GM12878 (cell line): ENCODE measurements at regions of chr22 and their contacts with region 1.

Region 1: GRCh38 chr22:31230871-31231621 is 18.9 kb downstream of the LIMK2 start:
- DNase-seq: no peak
- ATAC-seq: peak; percentile 81
- H3K4me3 ChIP-seq: no peak overlapping the region
- H3K27ac ChIP-seq: peak overlapping the region; percentile 49
- H3K4me1 ChIP-seq: peaks cover 25% of the 10 kb centered on the region
- H3K27me3 ChIP-seq: no peaks in the 10 kb centered on the region
- CTCF ChIP-seq: peak; percentile 67 to 83 (median 77)
- EP300 ChIP-seq: peak in 1 of 2 experiments; percentile 5; a peak in 1 of 4 replicates
- POLR2A ChIP-seq: no peak
- RAD21 ChIP-seq: peak; percentile 89

Region 2: DNA sequence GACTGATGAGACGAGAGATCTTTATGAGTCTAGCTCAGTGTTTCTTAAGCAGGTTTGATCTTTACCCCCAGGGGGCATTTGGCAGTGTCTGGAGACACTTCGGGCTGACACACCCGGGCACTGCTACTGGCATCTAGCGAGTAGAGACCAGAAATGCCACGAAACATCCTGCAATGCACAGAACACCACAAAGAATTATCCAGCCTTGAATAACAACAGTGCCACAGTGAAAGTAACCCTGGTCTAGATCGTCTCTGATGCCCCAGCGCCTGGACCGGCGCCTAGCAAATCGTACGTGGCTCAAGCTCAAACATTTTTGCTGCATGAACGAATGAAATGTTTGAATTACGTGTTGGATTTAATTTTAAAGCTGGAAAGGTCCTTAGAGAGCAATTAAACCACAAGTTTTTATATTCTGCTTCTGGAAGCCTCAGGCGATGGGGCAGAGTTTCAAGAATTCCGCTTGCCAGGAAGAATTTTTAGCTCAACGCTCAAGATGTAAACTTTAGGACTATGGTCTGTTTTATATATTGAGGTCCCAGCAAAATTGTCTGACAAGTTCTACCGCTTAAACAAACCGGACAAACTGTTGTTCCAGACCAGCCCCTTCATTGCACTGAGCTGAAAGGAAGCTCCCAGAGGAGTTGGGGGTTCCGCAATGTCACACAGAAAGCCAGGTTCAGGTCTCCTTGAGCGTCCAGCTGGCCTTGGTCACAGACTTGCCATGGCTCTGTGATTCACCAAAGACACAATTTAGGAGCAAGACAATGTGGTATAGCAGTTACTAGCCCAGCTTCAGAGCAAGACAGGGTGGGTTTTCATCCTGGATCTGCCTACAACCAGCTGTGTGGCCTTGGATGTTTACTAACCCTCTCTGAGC is 194.1 kb before region 1 on chr22:
- CTCF ChIA-PET with region 1: no interaction called
- POLR2A ChIA-PET with region 1: no interaction called
- RAD21 ChIA-PET with region 1: no interaction called
- SMC1A ChIA-PET with region 1: no interaction called
- in situ Hi-C with region 1: no loop called
- intact Hi-C with region 1: no loop called
- DNase-seq: no peak
- ATAC-seq: no peak
- H3K4me3 ChIP-seq: no peak overlapping the region
- H3K27ac ChIP-seq: no peak overlapping the region
- H3K4me1 ChIP-seq: no peaks in the 10 kb centered on the region
- H3K27me3 ChIP-seq: no peaks in the 10 kb centered on the region; a peak in 1 of 4 replicates
- CTCF ChIP-seq: no peak
- EP300 ChIP-seq: no peak
- POLR2A ChIP-seq: no peak
- RAD21 ChIP-seq: no peak

Region 3: DNA sequence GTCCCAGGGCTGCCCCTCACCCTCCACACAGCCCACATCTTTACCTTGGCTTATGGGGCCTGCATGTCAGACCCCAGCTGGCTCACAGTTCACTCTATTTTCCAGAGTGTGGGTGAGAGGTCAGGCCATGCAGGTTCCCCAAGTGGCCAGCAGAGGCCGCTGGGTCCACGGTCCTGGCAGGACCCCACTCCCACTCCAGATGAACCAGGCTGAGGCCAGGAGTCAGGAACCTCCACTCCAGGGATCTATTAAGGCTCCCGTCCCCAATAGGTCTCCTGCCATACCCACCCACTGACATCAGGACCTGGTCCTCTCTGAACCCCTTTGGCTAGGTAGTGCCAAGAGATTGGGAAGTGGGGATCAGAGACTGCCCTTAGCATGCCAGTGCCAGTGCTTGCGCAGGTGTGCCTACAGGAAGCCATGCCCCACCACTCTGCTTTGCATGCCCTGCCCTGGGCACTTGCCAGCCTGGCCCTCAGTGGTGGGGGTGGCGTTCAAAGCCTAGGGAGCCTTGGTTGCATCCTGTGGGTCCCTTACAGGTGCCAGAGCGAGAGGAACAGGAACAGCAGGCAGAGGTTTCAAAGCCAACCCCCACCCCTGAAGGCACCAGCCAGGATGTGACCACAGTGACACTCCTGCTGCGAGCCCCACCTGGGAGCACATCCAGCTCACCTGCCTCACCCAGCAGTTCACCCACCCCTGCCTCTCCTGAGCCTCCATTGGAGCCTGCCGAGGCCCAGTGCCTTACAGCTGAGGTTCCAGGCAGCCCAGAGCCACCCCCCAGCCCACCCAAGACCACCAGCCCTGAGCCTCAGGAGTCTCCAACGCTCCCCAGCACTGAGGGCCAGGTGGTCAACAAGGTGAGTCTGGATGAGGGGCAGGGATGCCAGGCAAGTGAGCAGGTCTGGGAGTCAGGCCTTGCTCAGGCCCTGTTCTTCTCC is 141.6 kb before region 1 on chr22:
- CTCF ChIA-PET with region 1: interaction called, 5 read pairs
- POLR2A ChIA-PET with region 1: no interaction called
- RAD21 ChIA-PET with region 1: interaction called, 3 read pairs
- SMC1A ChIA-PET with region 1: no interaction called
- in situ Hi-C with region 1: no loop called
- intact Hi-C with region 1: loop called (anchors 1 kb)
- DNase-seq: no peak
- ATAC-seq: peak; percentile 15; the same call in 1 of the 3 replicates
- H3K4me3 ChIP-seq: no peak overlapping the region
- H3K27ac ChIP-seq: no peak overlapping the region
- H3K4me1 ChIP-seq: peaks cover 3% of the 10 kb centered on the region
- H3K27me3 ChIP-seq: no peaks in the 10 kb centered on the region
- CTCF ChIP-seq: peak; percentile 81 to 89 (median 87)
- EP300 ChIP-seq: no peak
- POLR2A ChIP-seq: no peak
- RAD21 ChIP-seq: peak; percentile 69

Region 4: DNA sequence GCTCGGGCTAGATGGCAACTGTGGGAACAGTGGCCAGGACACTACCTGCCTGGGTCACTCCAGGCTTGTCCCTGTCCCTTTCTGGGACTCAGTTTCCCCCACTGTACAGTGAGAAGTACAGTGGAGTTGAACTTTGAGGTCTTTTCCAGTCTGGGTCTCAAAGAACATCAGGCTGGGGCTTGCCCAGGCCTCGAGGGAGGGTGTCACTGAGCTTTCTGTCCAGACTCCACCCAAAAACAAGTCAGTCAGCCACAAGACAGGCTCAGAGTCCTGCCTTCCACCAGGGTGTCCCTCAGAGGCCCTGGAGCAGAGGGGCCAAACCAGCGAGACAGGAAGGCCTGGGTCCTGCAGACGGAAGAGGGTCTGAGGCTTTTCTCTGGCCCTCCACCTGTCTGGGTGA is 88.8 kb before region 1 on chr22:
- CTCF ChIA-PET with region 1: no interaction called
- POLR2A ChIA-PET with region 1: no interaction called
- RAD21 ChIA-PET with region 1: no interaction called
- SMC1A ChIA-PET with region 1: no interaction called
- in situ Hi-C with region 1: no loop called
- intact Hi-C with region 1: no loop called
- DNase-seq: no peak
- ATAC-seq: no peak
- H3K4me3 ChIP-seq: no peak overlapping the region
- H3K27ac ChIP-seq: no peak overlapping the region
- H3K4me1 ChIP-seq: no peaks in the 10 kb centered on the region
- H3K27me3 ChIP-seq: no peaks in the 10 kb centered on the region; a peak in 2 of 4 replicates
- CTCF ChIP-seq: no peak
- EP300 ChIP-seq: no peak
- POLR2A ChIP-seq: no peak
- RAD21 ChIP-seq: no peak

Region 5: DNA sequence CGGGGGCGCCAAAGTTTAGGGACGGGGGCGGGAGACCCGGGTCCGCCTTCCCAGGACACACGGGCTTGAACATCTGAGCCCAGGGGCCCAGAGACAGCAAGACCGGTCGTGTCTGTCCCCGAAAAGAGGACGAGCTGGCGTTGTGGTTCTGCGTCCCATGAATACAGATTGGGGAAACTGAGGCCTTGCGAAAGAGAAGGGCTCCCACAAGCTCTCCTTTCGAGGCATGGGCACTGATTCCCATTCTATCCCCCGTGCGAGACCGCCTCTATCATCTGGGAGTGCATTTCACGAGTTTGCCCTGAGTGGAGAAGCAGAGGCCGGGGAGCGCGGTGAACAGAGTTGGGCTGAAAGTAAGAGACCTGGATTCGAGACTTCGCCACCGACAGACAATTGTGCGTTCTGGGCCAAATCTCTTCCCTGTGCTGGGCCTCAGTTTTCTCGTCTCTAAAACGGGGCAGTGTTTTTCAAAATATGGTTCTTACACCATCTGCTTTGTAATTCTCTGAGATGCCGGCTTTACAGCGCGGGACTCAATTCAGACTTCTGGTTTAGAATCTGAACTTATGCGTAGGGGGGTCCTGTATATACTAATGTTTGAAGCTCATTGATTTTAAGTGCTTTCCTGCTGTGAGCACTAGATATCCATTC is 70.6 kb before region 1 on chr22:
- CTCF ChIA-PET with region 1: interaction called, 6 read pairs
- POLR2A ChIA-PET with region 1: interaction called, 9 read pairs
- RAD21 ChIA-PET with region 1: interaction called, 4 read pairs
- SMC1A ChIA-PET with region 1: interaction called, 4 read pairs
- in situ Hi-C with region 1: no loop called
- intact Hi-C with region 1: loop called (anchors 5 kb)
- DNase-seq: no peak
- ATAC-seq: peak; percentile 67
- H3K4me3 ChIP-seq: peak overlapping the region; percentile 89
- H3K27ac ChIP-seq: peak overlapping the region; percentile 13; the same call in 1 of the 2 replicates
- H3K4me1 ChIP-seq: 0 out of 2 replicates have a peak, but pooled peaks cover 3% of the 10 kb centered on the region
- H3K27me3 ChIP-seq: no peaks in the 10 kb centered on the region; a peak in 1 of 4 replicates
- CTCF ChIP-seq: no peak
- EP300 ChIP-seq: no peak
- POLR2A ChIP-seq: no peak
- RAD21 ChIP-seq: no peak

Region 6: GRCh38 chr22:31211862-31212730 is 18.9 kb before region 1 on chr22 and contains the start of gene LIMK2:
- CTCF ChIA-PET with region 1: interaction called, 244 read pairs
- POLR2A ChIA-PET with region 1: interaction called, 21 read pairs
- RAD21 ChIA-PET with region 1: interaction called, 100 read pairs
- SMC1A ChIA-PET with region 1: interaction called, 260 read pairs
- in situ Hi-C with region 1: no loop called
- intact Hi-C with region 1: loop called (anchors 2 kb)
- DNase-seq: peak; percentile 60
- ATAC-seq: peak; percentile 97
- H3K4me3 ChIP-seq: peak within 1 kb of the TSS; percentile 84
- H3K27ac ChIP-seq: peak within 1 kb of the TSS; percentile 87
- H3K4me1 ChIP-seq: peaks cover 4% of the 10 kb centered on the region
- H3K27me3 ChIP-seq: no peaks in the 10 kb centered on the region
- CTCF ChIP-seq: peak; percentile 72 to 95 (median 86)
- EP300 ChIP-seq: no peak
- POLR2A ChIP-seq: peak; percentile 91
- RAD21 ChIP-seq: peak; percentile 77
- polyA plus RNA-seq, gene LIMK2: 2.9 to 5.0 TPM